Caco-2 (cell line): ENCODE measurements at regions of chr6 and their contacts with region 1.

Region 1: GRCh38 chr6:42901536-42901957 is 14.3 kb upstream of the PTCRA start:
- DNase-seq: peak; percentile 78 to 85
- H3K4me3 ChIP-seq: no peak overlapping the region
- H3K4me3 Mint-ChIP-seq: peak overlapping the region; percentile 53
- H3K27ac Mint-ChIP-seq: no peak overlapping the region
- H3K4me1 ChIP-seq: peaks cover 21% of the 10 kb centered on the region
- H3K4me1 Mint-ChIP-seq: peaks cover 19% of the 10 kb centered on the region
- H3K27me3 ChIP-seq: no peaks in the 10 kb centered on the region
- H3K27me3 Mint-ChIP-seq: no peaks in the 10 kb centered on the region
- CTCF ChIP-seq: peak; percentile 74 to 86

Region 2: DNA sequence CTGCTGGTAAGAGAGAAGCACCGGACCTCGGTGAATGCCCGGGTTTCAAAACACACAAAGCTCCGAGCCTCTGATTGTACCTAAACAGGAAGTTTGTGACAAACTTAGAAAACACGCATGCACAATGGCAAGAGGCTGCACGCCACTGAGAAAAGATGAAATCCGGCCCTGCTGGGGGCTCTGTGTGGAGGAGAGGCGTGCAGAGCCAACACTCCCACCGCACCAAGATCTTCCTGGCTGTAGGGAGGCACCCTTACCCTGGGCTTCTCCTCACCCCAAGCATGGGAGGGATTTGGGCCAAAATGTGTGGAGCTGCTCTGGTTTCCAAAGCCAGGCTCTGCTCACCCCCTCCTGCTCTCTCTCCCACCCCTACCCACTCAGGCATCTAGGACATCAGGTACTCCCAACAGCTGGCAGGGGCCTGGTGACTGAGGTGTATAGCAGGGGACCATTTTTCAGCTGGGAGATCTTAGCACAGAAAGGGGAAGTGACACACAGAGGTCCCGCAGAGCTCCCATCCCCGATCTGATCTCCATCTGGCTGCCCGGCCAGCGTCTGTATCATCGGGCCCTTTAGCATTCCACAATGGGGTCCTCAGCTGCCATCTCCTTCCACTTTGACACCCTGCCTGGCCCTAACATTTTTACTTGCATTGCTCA is 534.1 kb before region 1 on chr6:
- CTCF ChIA-PET with region 1: no interaction called
- POLR2A ChIA-PET with region 1: no interaction called
- intact Hi-C with region 1: no loop called
- DNase-seq: no peak
- H3K4me3 ChIP-seq: no peak overlapping the region
- H3K4me3 Mint-ChIP-seq: no peak overlapping the region
- H3K27ac Mint-ChIP-seq: no peak overlapping the region
- H3K4me1 ChIP-seq: peaks cover 12% of the 10 kb centered on the region
- H3K4me1 Mint-ChIP-seq: peaks cover 6% of the 10 kb centered on the region
- H3K27me3 ChIP-seq: no peaks in the 10 kb centered on the region
- H3K27me3 Mint-ChIP-seq: no peaks in the 10 kb centered on the region
- CTCF ChIP-seq: no peak

Region 3: DNA sequence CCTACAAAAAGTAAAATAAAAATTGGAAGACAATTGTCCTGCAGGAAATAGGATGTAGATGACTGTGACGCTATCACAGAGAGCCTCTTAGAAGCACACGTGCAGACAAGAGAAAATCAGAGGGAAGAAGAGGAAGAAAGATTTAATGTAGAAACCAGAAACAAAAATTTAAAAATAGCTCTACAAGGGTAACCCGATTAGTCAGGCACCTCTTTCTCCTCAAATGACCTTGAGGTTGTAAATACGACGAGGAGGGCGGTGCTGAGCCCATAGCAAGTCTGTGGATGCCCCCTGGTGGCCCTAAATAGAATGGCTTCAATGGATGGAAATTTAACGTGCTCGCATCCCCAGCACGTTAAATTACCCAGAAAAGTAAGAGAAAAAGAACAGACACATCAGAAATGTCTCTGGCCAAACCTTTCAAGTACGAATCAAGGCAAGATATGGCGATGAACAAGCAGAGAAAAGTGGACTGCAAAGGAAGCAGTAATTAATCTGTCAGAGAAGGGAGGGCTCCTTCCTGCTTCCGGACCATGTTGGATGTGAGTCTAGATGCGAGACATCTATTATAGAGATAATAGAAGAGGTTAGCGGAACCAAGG is 175.0 kb before region 1 on chr6:
- CTCF ChIA-PET with region 1: no interaction called
- POLR2A ChIA-PET with region 1: no interaction called
- intact Hi-C with region 1: loop called (anchors 1 kb)
- DNase-seq: peak; percentile 69 to 71
- H3K4me3 ChIP-seq: peak overlapping the region; percentile 30
- H3K4me3 Mint-ChIP-seq: peak overlapping the region; percentile 69
- H3K27ac Mint-ChIP-seq: no peak overlapping the region
- H3K4me1 ChIP-seq: peaks cover 4% of the 10 kb centered on the region; the same call in 1 of the 2 replicates
- H3K4me1 Mint-ChIP-seq: peaks cover 12% of the 10 kb centered on the region
- H3K27me3 ChIP-seq: no peaks in the 10 kb centered on the region
- H3K27me3 Mint-ChIP-seq: no peaks in the 10 kb centered on the region
- CTCF ChIP-seq: peak; percentile 77 to 79

Region 4: DNA sequence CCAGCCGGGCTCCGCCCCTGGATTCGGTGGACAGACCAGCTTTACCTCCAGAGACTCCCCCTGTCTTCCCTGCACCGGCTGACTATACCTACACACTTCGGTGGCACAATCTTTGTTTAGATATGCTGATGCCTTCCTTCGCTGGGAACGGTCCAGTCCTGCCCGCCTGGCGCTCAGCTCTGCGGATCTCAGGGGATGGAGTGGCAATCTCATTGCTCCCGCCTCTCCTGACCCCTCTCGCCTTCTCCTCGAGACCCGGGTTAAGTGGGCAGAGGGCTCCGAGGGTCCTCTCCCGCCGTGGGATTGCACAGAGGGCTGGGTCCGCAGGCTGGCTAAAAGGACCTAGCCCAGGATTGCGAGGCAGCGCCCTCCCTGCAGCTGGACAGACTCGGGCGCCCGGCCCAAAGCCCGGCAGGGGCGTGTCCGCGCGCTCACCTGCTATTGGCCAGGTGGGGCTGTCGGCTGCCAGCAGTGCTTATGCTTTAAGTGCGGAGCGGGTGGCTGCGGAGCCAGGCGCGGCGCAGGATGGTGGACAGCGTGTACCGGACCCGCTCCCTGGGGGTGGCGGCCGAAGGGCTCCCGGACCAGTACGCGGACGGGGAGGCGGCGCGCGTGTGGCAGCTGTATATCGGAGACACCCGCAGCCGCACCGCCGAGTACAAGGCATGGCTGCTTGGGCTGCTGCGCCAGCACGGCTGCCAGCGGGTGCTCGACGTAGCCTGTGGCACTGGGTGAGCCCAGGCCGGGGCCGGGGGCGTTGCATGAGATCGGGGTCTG is 58.9 kb after region 1 on chr6 and contains the start of gene GNMT:
- CTCF ChIA-PET with region 1: no interaction called
- POLR2A ChIA-PET with region 1: no interaction called
- intact Hi-C with region 1: loop called (anchors 1 kb)
- DNase-seq: peak; percentile 76 to 84
- H3K4me3 ChIP-seq: peak within 1 kb of the TSS; percentile 47
- H3K4me3 Mint-ChIP-seq: peak within 1 kb of the TSS; percentile 93
- H3K27ac Mint-ChIP-seq: peak within 1 kb of the TSS; percentile 59
- H3K4me1 ChIP-seq: no peaks in the 10 kb centered on the region
- H3K4me1 Mint-ChIP-seq: peaks cover 8% of the 10 kb centered on the region
- H3K27me3 ChIP-seq: no peaks in the 10 kb centered on the region
- H3K27me3 Mint-ChIP-seq: no peaks in the 10 kb centered on the region
- CTCF ChIP-seq: peak in 1 of 2 experiments; percentile 11
- total RNA-seq, gene GNMT: not detected in 2 replicates

Region 5: GRCh38 chr6:42996513-42996912 is 95.0 kb after region 1 on chr6:
- CTCF ChIA-PET with region 1: interaction called, 10 read pairs
- POLR2A ChIA-PET with region 1: no interaction called
- intact Hi-C with region 1: no loop called
- DNase-seq: no peak
- H3K4me3 ChIP-seq: no peak overlapping the region
- H3K4me3 Mint-ChIP-seq: no peak overlapping the region
- H3K27ac Mint-ChIP-seq: no peak overlapping the region
- H3K4me1 ChIP-seq: no peaks in the 10 kb centered on the region
- H3K4me1 Mint-ChIP-seq: no peaks in the 10 kb centered on the region
- H3K27me3 ChIP-seq: no peaks in the 10 kb centered on the region
- H3K27me3 Mint-ChIP-seq: no peaks in the 10 kb centered on the region
- CTCF ChIP-seq: peak in 1 of 2 experiments; percentile 11

Region 6: GRCh38 chr6:43053545-43054205 is 152.1 kb after region 1 on chr6 and contains the start of gene CUL7:
- CTCF ChIA-PET with region 1: no interaction called
- POLR2A ChIA-PET with region 1: interaction called, 3 read pairs
- intact Hi-C with region 1: loop called (anchors 5 kb)
- DNase-seq: peak; percentile 93
- H3K4me3 ChIP-seq: peak within 1 kb of the TSS; percentile 71
- H3K4me3 Mint-ChIP-seq: peak within 1 kb of the TSS; percentile 100
- H3K27ac Mint-ChIP-seq: peak within 1 kb of the TSS; percentile 97
- H3K4me1 ChIP-seq: peaks cover 25% of the 10 kb centered on the region
- H3K4me1 Mint-ChIP-seq: peaks cover 37% of the 10 kb centered on the region
- H3K27me3 ChIP-seq: no peaks in the 10 kb centered on the region
- H3K27me3 Mint-ChIP-seq: no peaks in the 10 kb centered on the region
- CTCF ChIP-seq: no peak
- total RNA-seq, gene CUL7: 25.3 and 26.7 TPM in 2 replicates

Region 7: DNA sequence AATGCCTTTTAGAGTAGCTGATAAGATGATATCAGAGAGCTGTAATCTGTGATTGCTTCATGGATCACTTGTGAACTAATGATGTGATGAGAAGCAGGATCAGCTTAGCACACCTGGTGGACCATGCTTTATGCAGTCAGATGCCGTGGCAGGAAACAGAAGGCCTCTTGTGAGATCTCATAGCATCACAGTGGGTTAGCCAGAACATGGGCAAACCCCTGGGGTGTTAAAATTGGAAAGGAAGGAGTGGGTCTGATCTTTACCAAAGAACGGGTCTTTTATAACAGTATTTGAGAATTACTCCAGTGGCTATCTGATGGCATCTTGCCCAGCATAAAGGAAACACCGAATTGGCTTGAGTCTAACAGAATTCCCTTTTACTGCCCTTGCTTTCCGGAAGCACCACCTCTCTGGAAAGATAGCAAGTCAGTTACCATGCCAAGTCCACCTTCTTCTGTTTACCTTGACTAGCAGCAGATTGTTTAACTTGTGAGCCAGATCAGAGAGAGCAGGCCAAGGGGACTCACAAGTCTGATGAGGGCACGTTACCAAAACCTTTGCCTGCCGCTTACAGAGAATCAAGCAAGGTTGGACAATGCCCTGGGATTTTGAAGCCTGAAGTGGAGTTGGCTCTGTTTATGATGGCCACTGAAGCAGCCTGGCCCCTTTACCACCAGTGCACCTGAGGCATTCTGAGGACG is 248.7 kb after region 1 on chr6:
- CTCF ChIA-PET with region 1: no interaction called
- POLR2A ChIA-PET with region 1: no interaction called
- intact Hi-C with region 1: no loop called
- DNase-seq: no peak
- H3K4me3 ChIP-seq: no peak overlapping the region
- H3K4me3 Mint-ChIP-seq: no peak overlapping the region
- H3K27ac Mint-ChIP-seq: no peak overlapping the region
- H3K4me1 ChIP-seq: no peaks in the 10 kb centered on the region
- H3K4me1 Mint-ChIP-seq: no peaks in the 10 kb centered on the region
- H3K27me3 ChIP-seq: no peaks in the 10 kb centered on the region
- H3K27me3 Mint-ChIP-seq: no peaks in the 10 kb centered on the region
- CTCF ChIP-seq: no peak

Region 8: GRCh38 chr6:43174263-43175112 is 272.9 kb after region 1 on chr6:
- CTCF ChIA-PET with region 1: no interaction called
- POLR2A ChIA-PET with region 1: interaction called, 9 read pairs
- intact Hi-C with region 1: loop called (anchors 1 kb)
- DNase-seq: peak; percentile 86 to 93
- H3K4me3 ChIP-seq: no peak overlapping the region
- H3K4me3 Mint-ChIP-seq: no peak overlapping the region
- H3K27ac Mint-ChIP-seq: no peak overlapping the region
- H3K4me1 ChIP-seq: peaks cover 25% of the 10 kb centered on the region; the same call in 1 of the 2 replicates
- H3K4me1 Mint-ChIP-seq: peaks cover 12% of the 10 kb centered on the region
- H3K27me3 ChIP-seq: no peaks in the 10 kb centered on the region
- H3K27me3 Mint-ChIP-seq: no peaks in the 10 kb centered on the region
- CTCF ChIP-seq: no peak

Region 9: GRCh38 chr6:43506667-43507471 is 605.3 kb after region 1 on chr6:
- CTCF ChIA-PET with region 1: no interaction called
- POLR2A ChIA-PET with region 1: no interaction called
- intact Hi-C with region 1: loop called (anchors 10 kb)
- DNase-seq: peak; percentile 70 to 84
- H3K4me3 ChIP-seq: no peak overlapping the region
- H3K4me3 Mint-ChIP-seq: no peak overlapping the region
- H3K27ac Mint-ChIP-seq: no peak overlapping the region
- H3K4me1 ChIP-seq: peaks cover 10% of the 10 kb centered on the region; the same call in 1 of the 2 replicates
- H3K4me1 Mint-ChIP-seq: peaks cover 7% of the 10 kb centered on the region
- H3K27me3 ChIP-seq: no peaks in the 10 kb centered on the region
- H3K27me3 Mint-ChIP-seq: peaks cover 6% of the 10 kb centered on the region
- CTCF ChIP-seq: peak; percentile 88